Cardiac septum (tissue), 1 donor: ENCODE measurements at regions of chr13 and their contacts with region 1.

Region 1: DNA sequence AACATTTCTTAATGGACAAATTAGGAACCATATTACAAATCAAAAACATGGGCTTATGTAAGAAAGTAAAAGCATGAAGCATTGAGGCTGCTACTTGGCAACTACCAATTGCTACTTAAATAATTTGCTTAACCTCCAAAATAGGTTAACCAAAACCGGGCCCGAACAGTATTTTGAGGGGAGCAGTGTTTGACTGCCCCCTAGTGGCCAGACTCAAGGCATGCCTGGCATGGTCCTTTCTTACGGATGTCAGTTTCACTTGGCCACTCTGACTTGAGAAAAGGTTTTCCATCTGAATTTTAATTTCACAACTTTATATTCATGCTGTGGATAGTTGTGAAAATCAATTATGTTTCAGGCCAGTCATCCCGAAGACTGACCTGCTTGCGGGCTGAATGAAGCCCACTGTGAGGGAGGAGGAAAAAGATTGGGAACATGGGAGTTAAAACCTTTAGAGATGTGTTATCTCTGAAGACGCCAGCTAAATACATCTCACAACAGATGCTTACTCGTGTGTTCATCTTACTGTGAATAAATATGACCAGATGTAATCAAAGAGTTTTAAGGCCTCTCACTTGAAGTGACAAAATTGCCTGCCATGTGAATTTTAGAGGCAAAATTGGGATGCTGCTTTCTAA is 2.9 kb downstream of the RXFP2 start:
- DNase-seq: no peak

Region 2: GRCh38 chr13:31236211-31236786 is 505.9 kb before region 1 on chr13:
- intact Hi-C with region 1: loop called (anchors 10 kb)
- DNase-seq: no peak

Region 3: GRCh38 chr13:31431722-31432137 is 310.5 kb before region 1 on chr13:
- intact Hi-C with region 1: loop called (anchors 2 kb)
- DNase-seq: no peak

Region 4: DNA sequence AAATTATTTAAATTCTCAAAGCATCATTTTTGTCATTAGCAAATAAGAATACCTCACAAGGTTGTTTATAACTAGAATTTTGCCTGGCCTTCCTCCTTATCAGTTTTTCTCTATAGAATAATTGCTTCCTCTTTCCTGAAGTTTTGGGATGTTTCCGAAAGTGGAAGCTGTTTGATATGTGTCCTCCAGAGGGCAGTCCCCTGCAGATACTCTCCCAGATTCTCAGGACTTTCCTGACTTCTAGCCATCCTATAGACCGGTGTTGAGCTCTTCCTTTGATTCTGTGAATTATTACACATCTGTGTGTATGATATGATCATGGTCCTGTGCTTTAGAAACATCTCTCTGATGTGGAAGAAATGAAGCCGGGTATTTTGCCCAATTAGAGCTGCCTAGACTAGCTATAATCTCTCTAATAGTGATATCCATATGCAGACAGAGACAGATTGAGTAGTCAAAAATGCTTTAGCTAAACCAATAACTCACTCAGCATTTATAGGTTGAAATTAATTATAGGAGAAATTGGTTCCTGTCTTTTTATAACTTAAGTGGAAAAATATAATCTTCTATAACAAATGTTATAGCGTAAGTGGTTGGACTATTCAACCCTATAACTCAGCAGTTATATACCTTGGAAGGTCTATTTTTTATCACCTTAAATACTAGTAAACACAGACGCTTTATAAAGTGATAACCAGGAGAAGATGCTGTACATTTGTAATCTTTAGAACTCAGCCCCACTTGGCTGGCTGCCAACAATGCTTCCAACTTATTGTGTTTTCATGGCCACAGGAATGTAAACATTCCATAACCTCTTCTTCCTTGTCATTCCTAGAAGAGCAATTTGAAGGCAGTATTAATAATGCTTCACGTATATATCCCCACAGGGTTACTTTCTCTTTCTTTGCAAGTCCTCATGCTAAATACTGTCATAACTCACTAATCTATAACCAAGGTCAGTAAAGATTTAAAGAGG is 203.9 kb before region 1 on chr13:
- intact Hi-C with region 1: loop called (anchors 10 kb)
- DNase-seq: no peak